ENCODE measurements at regions of chr6 and their contacts with region 1.

Region 1: DNA sequence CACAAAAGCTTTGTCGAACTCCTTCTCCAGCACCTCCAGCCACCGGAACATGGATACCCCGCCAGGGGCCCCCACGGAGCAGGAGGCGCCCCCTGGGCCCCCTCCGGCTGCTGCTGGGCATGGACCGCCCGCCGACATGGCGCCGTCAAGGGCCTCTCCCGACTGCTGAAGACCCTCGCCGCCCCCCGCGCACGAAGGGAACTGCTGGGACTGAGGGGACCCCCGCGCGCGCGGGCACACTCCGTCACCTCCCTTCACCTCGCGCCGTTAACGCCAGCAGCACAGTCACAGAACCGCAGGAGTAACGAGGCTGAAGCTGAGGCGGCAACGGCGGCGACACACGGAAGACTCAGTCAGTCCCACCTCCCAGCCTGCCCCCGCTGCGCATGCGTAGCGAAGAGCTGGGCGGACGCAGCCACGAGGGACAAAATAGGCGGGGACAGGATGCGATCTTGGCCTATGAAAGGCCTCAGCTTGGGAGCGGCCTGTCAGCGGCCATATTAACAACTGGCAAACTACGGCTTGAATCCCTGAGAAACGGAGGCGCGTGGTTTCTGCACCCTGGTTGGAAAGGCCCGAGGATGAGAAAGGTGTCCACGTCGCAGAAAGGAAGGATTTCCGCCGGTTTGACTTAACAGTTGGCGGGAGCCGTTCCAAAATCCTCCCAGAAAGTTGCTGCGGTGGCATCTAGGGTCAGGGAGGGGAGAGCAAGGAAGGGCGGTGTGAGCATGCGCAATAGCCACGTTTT is at the start of gene GOPC:
- DNase-seq: peak; percentile 97 to 98
- ATAC-seq: peak; percentile 100
- H3K4me3 ChIP-seq: peak within 1 kb of the TSS; percentile 63 to 89
- H3K27ac ChIP-seq: peak within 1 kb of the TSS; percentile 3 to 41
- H3K4me1 ChIP-seq: peaks cover 2 to 3% of the 10 kb centered on the region in 2 donors
- H3K27me3 ChIP-seq: no peaks in the 10 kb centered on the region
- total RNA-seq, gene GOPC: 21.2 to 28.4 TPM

Region 2: GRCh38 chr6:117346142-117346930 is 256.0 kb before region 1 on chr6:
- intact Hi-C with region 1: loop called (anchors 2 to 5 kb)
- DNase-seq: no peak
- ATAC-seq: peak; percentile 74
- H3K4me3 ChIP-seq: peak overlapping the region in 1 of 2 donors; percentile 54
- H3K27ac ChIP-seq: no peak overlapping the region
- H3K4me1 ChIP-seq: no peaks in the 10 kb centered on the region
- H3K27me3 ChIP-seq: no peaks in the 10 kb centered on the region

Region 3: GRCh38 chr6:117655380-117655779 is 53.1 kb after region 1 on chr6:
- intact Hi-C with region 1: no loop called
- DNase-seq: no peak
- ATAC-seq: no peak
- H3K4me3 ChIP-seq: no peak overlapping the region
- H3K27ac ChIP-seq: no peak overlapping the region
- H3K4me1 ChIP-seq: no peaks in the 10 kb centered on the region
- H3K27me3 ChIP-seq: no peaks in the 10 kb centered on the region

Region 4: GRCh38 chr6:117674991-117675657 is 72.8 kb after region 1 on chr6 and contains the start of gene NUS1:
- intact Hi-C with region 1: loop called in 1 of 2 experiments (anchors 5 kb)
- DNase-seq: peak; percentile 99
- ATAC-seq: peak; percentile 100
- H3K4me3 ChIP-seq: peak within 1 kb of the TSS; percentile 53 to 59
- H3K27ac ChIP-seq: peak within 1 kb of the TSS in 1 of 2 donors; percentile 56
- H3K4me1 ChIP-seq: peaks cover 0 to 5% of the 10 kb centered on the region in 2 donors
- H3K27me3 ChIP-seq: no peaks in the 10 kb centered on the region
- total RNA-seq, gene NUS1: 30.5 to 36.9 TPM